ENCODE measurements at regions of chr2 and their contacts with region 1.

Region 1: GRCh38 chr2:196511258-196512168 is 128.0 kb upstream of the CCDC150 start:
- DNase-seq: no peak
- H3K4me3 ChIP-seq: no peak overlapping the region
- H3K27ac ChIP-seq: no peak overlapping the region
- H3K4me1 ChIP-seq: no peaks in the 10 kb centered on the region
- H3K27me3 ChIP-seq: no peaks in the 10 kb centered on the region
- CTCF ChIP-seq: no peak
- EP300 ChIP-seq: no peak
- POLR2A ChIP-seq: no peak

Region 2: DNA sequence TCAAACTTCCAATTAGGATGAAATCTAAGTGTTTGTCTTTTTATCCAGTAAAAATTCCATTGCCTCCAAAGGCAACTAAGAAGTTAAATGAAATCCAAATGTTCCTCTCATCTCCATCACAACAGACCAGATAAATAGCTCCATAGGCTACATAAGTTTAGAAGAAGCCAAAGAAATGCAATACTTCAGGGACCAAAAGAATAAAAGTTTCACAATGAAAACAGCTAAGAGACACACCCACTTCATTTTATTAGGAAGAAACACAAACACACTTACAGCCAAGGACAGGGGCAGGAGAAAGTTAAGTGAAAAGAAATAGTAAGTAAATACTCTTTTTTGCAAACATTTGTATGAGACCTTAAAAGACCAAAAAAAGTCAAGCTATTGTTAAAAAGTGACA is 39.5 kb after region 1 on chr2:
- intact Hi-C with region 1: loop called in 1 of 4 experiments (anchors 1 kb)
- DNase-seq: no peak
- H3K4me3 ChIP-seq: no peak overlapping the region
- H3K27ac ChIP-seq: no peak overlapping the region
- H3K4me1 ChIP-seq: no peaks in the 10 kb centered on the region
- H3K27me3 ChIP-seq: no peaks in the 10 kb centered on the region
- CTCF ChIP-seq: no peak
- EP300 ChIP-seq: no peak
- POLR2A ChIP-seq: no peak